ENCODE measurements at regions of chr6 and their contacts with region 1.

Region 1: GRCh38 chr6:3052481-3053230 is 15.6 kb upstream of the RIPK1 start:
- DNase-seq: no peak
- H3K4me3 ChIP-seq: no peak overlapping the region
- H3K27ac ChIP-seq: no peak overlapping the region
- H3K4me1 ChIP-seq: peaks cover 0 to 4% of the 10 kb centered on the region in 2 donors
- H3K27me3 ChIP-seq: no peaks in the 10 kb centered on the region
- CTCF ChIP-seq: no peak
- POLR2A ChIP-seq: no peak

Region 2: DNA sequence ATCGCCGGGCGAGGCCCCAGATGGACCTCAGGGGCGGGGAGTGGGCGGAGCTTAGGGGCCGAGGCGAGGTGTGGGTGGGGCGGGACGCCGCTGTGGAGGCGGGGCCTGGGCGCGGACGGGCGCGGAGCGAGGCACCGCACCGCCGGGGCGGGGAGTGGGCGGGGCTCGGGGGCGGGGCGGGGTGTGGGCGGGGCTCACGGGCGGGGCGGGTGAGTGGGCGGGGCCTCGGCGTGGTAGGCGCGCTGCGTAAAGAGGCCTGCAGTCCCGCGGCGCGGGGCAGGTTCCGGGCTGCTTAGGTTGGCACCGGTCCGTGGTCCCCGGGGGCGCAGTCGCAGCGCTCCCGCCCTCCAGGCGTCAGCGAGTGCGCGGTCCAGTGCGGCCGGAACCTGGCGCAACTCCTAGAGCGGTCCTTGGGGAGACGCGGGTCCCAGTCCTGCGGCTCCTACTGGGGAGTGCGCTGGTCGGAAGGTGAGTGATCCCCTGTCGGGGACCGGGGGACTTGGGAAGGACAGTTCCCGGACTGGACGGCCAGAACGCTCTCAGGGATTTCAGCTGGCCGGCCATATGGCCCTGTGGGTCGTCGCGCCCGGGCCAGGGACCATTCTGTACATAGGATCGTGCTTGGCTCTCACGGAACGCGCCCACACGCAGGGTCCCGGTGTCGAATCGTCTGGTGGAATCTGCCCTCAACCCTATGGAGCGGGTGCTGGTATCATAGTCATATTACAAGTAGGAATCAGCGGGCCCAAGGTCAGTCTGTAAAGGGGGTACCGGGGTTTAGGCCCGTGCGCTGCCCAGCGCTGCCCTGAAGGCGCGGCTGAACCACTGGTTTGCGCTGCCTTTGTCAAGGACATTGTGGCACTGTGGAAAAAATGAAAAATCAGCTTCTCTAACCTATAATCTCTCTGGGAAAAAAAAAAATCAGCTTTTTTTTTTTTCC is 52.8 kb before region 1 on chr6 and contains the start of gene NQO2:
- intact Hi-C with region 1: loop called (anchors 5 kb)
- DNase-seq: peak; percentile 90 to 95 (median 94)
- H3K4me3 ChIP-seq: peak within 1 kb of the TSS; percentile 43 to 83 (median 71)
- H3K27ac ChIP-seq: peak within 1 kb of the TSS; percentile 85 to 98 (median 96)
- H3K4me1 ChIP-seq: peaks cover 11 to 29% of the 10 kb centered on the region in 2 donors
- H3K27me3 ChIP-seq: no peaks in the 10 kb centered on the region
- CTCF ChIP-seq: peak in 2 of 6 experiments; percentile 6 to 25
- POLR2A ChIP-seq: peak; percentile 86 to 95
- total RNA-seq, gene NQO2: 133 to 200 (median 157) TPM

Region 3: DNA sequence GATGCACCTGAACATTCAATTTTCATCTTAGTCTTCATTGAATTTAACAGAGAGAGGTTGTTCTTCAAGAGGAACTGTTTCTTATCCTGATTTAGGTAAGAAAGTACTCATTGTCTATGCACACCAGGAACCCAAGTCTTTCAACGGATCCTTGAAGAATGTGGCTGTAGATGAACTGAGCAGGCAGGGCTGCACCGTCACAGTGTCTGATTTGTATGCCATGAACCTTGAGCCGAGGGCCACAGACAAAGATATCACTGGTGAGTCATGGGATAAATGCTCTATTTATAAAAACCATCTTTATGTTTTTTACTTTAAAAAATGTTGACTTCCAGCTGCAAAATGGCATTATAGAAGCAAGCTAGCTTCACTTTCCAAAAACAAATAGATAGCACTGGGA is 42.7 kb before region 1 on chr6:
- intact Hi-C with region 1: loop called in 1 of 2 experiments (anchors 5 kb)
- DNase-seq: peak in 5 of 7 donors; percentile 63 to 76 (median 74)
- H3K4me3 ChIP-seq: no peak overlapping the region
- H3K27ac ChIP-seq: peak overlapping the region in 4 of 5 donors; percentile 13 to 48 (median 32)
- H3K4me1 ChIP-seq: peaks cover 11 to 26% of the 10 kb centered on the region in 2 donors
- H3K27me3 ChIP-seq: no peaks in the 10 kb centered on the region
- CTCF ChIP-seq: no peak
- POLR2A ChIP-seq: no peak

Measured in adrenal gland (tissue), 19 donors.